HepG2 (cell line): ENCODE measurements at regions of chr2 and their contacts with region 1.

Region 1: GRCh38 chr2:113756355-113757137 is at the start of gene SLC35F5:
- DNase-seq: peak; percentile 83
- ATAC-seq: peak; percentile 97
- H3K4me3 ChIP-seq: peak within 1 kb of the TSS; percentile 96 to 100 (median 97)
- H3K27ac ChIP-seq: peak within 1 kb of the TSS; percentile 84
- H3K4me1 ChIP-seq: peaks cover 19% of the 10 kb centered on the region
- H3K27me3 ChIP-seq: no peaks in the 10 kb centered on the region; a peak in 1 of 5 replicates
- CTCF ChIP-seq: no peak; the same call in 1 of the 2 replicates
- EP300 ChIP-seq: peak in 1 of 2 experiments; percentile 48; a peak in 2 of 4 replicates
- POLR2A ChIP-seq: peak; percentile 93 to 98
- RAD21 ChIP-seq: peak; percentile 70
- total RNA-seq, gene SLC35F5: 121 and 174 TPM in 2 replicates

Region 2: GRCh38 chr2:113685471-113685870 is 71.1 kb before region 1 on chr2:
- CTCF ChIA-PET with region 1: no interaction called
- POLR2A ChIA-PET with region 1: no interaction called
- in situ Hi-C with region 1: no loop called
- intact Hi-C with region 1: no loop called
- DNase-seq: no peak
- ATAC-seq: no peak
- H3K4me3 ChIP-seq: no peak overlapping the region
- H3K27ac ChIP-seq: no peak overlapping the region
- H3K4me1 ChIP-seq: no peaks in the 10 kb centered on the region
- H3K27me3 ChIP-seq: no peaks in the 10 kb centered on the region
- CTCF ChIP-seq: no peak
- EP300 ChIP-seq: no peak
- POLR2A ChIP-seq: no peak
- RAD21 ChIP-seq: no peak

Region 3: GRCh38 chr2:113739849-113740248 is 16.7 kb before region 1 on chr2:
- CTCF ChIA-PET with region 1: no interaction called
- POLR2A ChIA-PET with region 1: interaction called, 29 read pairs
- in situ Hi-C with region 1: no loop called
- intact Hi-C with region 1: no loop called
- DNase-seq: no peak
- ATAC-seq: no peak
- H3K4me3 ChIP-seq: no peak overlapping the region
- H3K27ac ChIP-seq: no peak overlapping the region
- H3K4me1 ChIP-seq: no peaks in the 10 kb centered on the region
- H3K27me3 ChIP-seq: no peaks in the 10 kb centered on the region
- CTCF ChIP-seq: no peak
- EP300 ChIP-seq: no peak
- POLR2A ChIP-seq: no peak
- RAD21 ChIP-seq: no peak

Region 4: GRCh38 chr2:113795405-113795920 is 38.9 kb after region 1 on chr2:
- CTCF ChIA-PET with region 1: no interaction called
- POLR2A ChIA-PET with region 1: interaction called, 6 read pairs
- in situ Hi-C with region 1: no loop called
- intact Hi-C with region 1: loop called (anchors 1 kb)
- DNase-seq: no peak
- ATAC-seq: no peak
- H3K4me3 ChIP-seq: no peak overlapping the region
- H3K27ac ChIP-seq: no peak overlapping the region
- H3K4me1 ChIP-seq: peaks cover 21% of the 10 kb centered on the region
- H3K27me3 ChIP-seq: 0 out of 5 replicates have a peak, but pooled peaks cover 0 to 4% of the 10 kb centered on the region in 2 experiments
- CTCF ChIP-seq: no peak
- EP300 ChIP-seq: no peak
- POLR2A ChIP-seq: no peak
- RAD21 ChIP-seq: no peak

Region 5: DNA sequence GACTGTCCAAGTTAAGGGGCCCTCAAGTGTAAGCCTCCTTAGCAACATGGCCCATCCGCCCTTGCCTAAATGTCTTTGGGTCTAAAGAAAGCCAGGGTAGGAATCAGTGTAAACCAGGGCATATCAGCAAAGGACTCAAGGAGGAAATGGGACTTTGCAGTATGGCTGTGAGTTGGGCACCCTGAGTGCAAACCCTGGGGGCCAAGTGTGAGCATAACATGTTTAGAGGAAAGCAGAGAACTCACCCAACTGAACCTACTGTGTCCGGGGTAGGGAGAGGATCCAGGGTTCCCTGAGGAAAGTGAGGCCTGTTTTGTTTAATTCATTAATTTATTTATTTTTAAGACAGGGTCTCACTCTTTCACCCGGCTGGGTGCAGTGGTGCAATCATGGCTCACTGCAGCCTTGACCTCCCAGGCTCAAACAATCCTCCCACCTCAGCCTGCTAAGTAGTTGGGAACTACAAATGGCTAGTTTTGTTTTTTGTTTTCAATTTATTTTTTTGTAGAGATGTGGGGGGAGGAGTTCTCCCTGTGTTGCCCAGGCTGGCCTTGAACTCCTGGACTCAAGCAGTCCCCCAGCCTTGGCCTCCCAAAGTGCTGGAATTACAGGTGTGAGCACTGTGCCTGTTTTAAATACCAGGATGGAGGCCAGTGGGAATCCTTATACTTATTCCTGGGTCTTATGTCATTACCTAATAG is 82.3 kb after region 1 on chr2:
- CTCF ChIA-PET with region 1: no interaction called
- POLR2A ChIA-PET with region 1: interaction called, 10 read pairs
- in situ Hi-C with region 1: no loop called
- intact Hi-C with region 1: no loop called
- DNase-seq: peak; percentile 44
- ATAC-seq: peak; percentile 94
- H3K4me3 ChIP-seq: peak overlapping the region in 2 of 3 experiments; percentile 8 to 26; a peak in 3 of 6 replicates
- H3K27ac ChIP-seq: peak overlapping the region; percentile 37
- H3K4me1 ChIP-seq: peaks cover 32% of the 10 kb centered on the region
- H3K27me3 ChIP-seq: no peaks in the 10 kb centered on the region
- CTCF ChIP-seq: no peak
- EP300 ChIP-seq: peak in 1 of 2 experiments; percentile 36; a peak in 1 of 4 replicates
- POLR2A ChIP-seq: no peak
- RAD21 ChIP-seq: no peak

Region 6: GRCh38 chr2:113889471-113890252 is 133.1 kb after region 1 on chr2 and contains the start of gene ACTR3:
- CTCF ChIA-PET with region 1: no interaction called
- POLR2A ChIA-PET with region 1: interaction called, 32 read pairs
- in situ Hi-C with region 1: loop called (anchors 5 kb)
- intact Hi-C with region 1: loop called (anchors 1 kb)
- DNase-seq: peak; percentile 98
- ATAC-seq: peak; percentile 91
- H3K4me3 ChIP-seq: peak within 1 kb of the TSS; percentile 92 to 96 (median 95)
- H3K27ac ChIP-seq: peak within 1 kb of the TSS; percentile 94
- H3K4me1 ChIP-seq: peaks cover 62% of the 10 kb centered on the region
- H3K27me3 ChIP-seq: no peaks in the 10 kb centered on the region; a peak in 1 of 5 replicates
- CTCF ChIP-seq: peak; percentile 36; the same call in 1 of the 2 replicates
- EP300 ChIP-seq: 0 out of 4 replicates have a peak, but pooled peaks of 1 of the 2 experiments have one; percentile 40
- POLR2A ChIP-seq: peak; percentile 93 to 99
- RAD21 ChIP-seq: peak; percentile 51
- total RNA-seq, gene ACTR3: 225 and 321 TPM in 2 replicates

Region 7: GRCh38 chr2:113965644-113966043 is 209.1 kb after region 1 on chr2:
- CTCF ChIA-PET with region 1: no interaction called
- POLR2A ChIA-PET with region 1: interaction called, 3 read pairs
- in situ Hi-C with region 1: no loop called
- intact Hi-C with region 1: loop called (anchors 5 kb)
- DNase-seq: peak; percentile 94
- ATAC-seq: peak; percentile 94
- H3K4me3 ChIP-seq: no peak overlapping the region
- H3K27ac ChIP-seq: peak overlapping the region; percentile 79
- H3K4me1 ChIP-seq: peaks cover 43% of the 10 kb centered on the region
- H3K27me3 ChIP-seq: no peaks in the 10 kb centered on the region
- CTCF ChIP-seq: peak; percentile 97
- EP300 ChIP-seq: peak in 1 of 2 experiments; percentile 48; a peak in 1 of 4 replicates
- POLR2A ChIP-seq: no peak
- RAD21 ChIP-seq: peak; percentile 87

Region 8: GRCh38 chr2:114550895-114551793 is 794.6 kb after region 1 on chr2:
- CTCF ChIA-PET with region 1: no interaction called
- POLR2A ChIA-PET with region 1: interaction called, 9 read pairs
- in situ Hi-C with region 1: loop called (anchors 25 kb)
- intact Hi-C with region 1: loop called (anchors 1 kb)
- DNase-seq: peak; percentile 74
- ATAC-seq: peak; percentile 88
- H3K4me3 ChIP-seq: no peak overlapping the region
- H3K27ac ChIP-seq: peak overlapping the region; percentile 15
- H3K4me1 ChIP-seq: peaks cover 36% of the 10 kb centered on the region
- H3K27me3 ChIP-seq: no peaks in the 10 kb centered on the region
- CTCF ChIP-seq: peak; percentile 95
- EP300 ChIP-seq: peak in 1 of 2 experiments; percentile 15; a peak in 1 of 4 replicates
- POLR2A ChIP-seq: no peak
- RAD21 ChIP-seq: peak; percentile 91